Left ventricle myocardium superior (tissue), 1 donor: ENCODE measurements at regions of chr1 and their contacts with region 1.

Region 1: DNA sequence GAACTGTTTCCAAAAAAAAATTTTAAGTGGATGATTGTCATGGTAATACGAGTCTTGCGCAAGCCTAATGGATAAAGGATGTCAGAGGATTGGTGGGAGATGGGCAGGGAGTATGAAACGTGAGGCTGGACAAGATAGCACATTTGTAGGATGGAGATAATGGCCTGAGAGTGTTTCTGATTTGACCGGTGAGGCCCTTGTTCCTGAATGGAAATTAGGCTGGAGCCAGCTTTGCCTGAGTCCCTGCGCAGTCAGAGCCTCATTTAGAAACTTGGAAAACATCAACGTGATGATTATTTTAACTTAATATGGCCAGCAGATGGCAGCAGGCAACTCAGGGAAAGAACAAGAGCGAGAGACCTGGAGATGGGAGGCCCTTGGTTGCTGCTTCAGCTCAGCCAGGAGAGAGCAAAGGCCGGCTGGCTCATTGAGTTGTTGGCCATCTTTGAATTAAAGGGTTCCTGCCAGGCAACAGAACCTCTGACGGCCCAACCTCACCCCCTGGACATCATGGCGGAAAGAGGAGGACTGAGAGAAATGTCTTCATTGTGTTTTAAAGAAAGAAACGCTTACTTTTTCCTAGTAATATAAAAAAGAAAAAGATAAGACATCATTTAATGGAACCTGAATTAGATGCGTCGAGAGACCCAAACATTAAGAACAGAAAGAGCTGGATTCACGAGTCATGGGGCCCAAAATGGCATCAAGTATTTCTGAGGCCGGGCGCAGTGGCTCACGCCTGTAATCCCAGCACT is 80.3 kb downstream of the SELENOF start:
- DNase-seq: peak; percentile 63
- ATAC-seq: peak; percentile 92

Region 2: GRCh38 chr1:86972262-86972661 is 138.6 kb after region 1 on chr1:
- intact Hi-C with region 1: loop called (anchors 10 kb)
- DNase-seq: no peak
- ATAC-seq: no peak

Region 3: DNA sequence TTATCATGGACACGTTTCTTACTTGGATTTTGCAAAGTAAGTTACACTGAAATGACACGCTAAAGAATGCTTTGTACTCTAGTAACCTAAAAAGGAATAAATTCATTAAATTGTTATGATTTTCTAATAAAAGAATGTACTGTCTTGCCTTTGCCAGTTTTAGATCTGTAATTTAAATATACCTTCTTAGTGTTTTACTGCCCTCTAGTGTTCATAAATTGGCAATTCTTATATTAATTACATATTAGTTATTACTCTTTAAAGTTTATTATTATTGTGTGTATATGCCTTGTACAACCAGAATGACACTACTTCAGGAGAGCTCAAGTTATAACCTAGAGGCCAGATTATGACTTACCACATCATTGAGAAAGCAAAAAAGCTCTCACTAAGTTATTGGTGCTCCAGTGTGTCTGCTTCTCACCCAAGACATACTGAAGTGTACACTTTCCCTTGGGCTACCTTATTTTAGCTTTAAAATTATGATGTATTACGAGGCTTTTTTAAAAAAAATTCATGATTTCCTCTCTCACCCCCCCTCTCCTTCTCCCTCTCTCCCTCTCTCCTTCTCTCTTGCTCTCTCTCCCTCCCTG is 250.7 kb after region 1 on chr1:
- intact Hi-C with region 1: loop called (anchors 5 kb)
- DNase-seq: no peak
- ATAC-seq: peak; percentile 24